CD14-positive monocyte (primary cell): ENCODE measurements at regions of chr12 and their contacts with region 1.

Region 1: DNA sequence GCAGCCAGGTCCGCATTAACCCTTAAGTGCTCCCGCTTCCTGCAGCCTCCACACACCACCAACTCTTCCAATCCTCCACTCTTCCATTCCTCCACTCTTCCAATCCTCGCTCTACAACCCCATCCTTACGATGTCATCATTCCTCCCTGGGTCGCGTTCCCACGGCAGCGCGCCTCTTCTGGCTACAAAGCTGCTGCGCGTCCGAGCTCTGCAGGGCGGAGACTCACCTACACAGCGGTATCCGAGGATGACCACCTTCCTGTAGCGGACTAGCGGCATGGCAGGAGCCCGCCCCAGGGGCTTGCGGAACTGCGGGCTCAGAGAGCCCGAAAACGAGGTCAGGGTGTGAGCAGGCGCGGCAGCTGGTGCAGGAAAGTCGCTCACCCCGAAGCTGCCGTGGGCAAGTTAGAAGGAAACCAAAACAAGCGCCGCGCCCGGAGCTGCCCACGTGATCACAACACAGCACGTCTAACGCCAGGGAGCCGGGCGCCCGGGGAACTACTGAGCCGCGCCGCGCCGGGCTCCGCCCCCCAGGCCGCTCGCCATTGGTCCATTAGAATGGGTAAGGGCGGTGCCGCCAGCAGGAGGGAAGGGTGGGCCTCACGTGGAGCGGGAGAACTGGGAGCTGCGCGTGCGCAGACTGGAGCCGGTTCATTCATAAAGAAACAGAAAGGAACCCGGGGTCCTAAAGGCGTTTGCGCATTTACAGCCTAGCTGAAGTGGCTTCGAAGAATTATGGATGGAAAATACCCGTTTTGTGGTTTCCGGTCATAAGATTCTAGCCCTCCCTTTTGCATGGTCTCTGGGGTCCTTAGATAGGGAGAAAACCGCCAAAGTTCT is at the start of gene RHEBL1:
- DNase-seq: peak; percentile 98 to 99 (median 98)
- H3K4me3 ChIP-seq: peak within 1 kb of the TSS; percentile 80 to 90 (median 81)
- H3K4me3 Mint-ChIP-seq: peak within 1 kb of the TSS; percentile 97 to 98
- H3K27ac ChIP-seq: peak within 1 kb of the TSS; percentile 69 to 72
- H3K27ac Mint-ChIP-seq: peak within 1 kb of the TSS; percentile 77 to 94 (median 91)
- H3K4me1 ChIP-seq: peaks cover 13 to 15% of the 10 kb centered on the region in 2 donors
- H3K4me1 Mint-ChIP-seq: peaks cover 15% of the 10 kb centered on the region
- H3K27me3 ChIP-seq: no peaks in the 10 kb centered on the region
- H3K27me3 Mint-ChIP-seq: peaks cover 1 to 9% (median 5%) of the 10 kb centered on the region in 3 donors
- CTCF ChIP-seq: peak; percentile 13
- polyA plus RNA-seq, gene RHEBL1: 0.17 to 0.96 (median 0.50) TPM

Region 2: GRCh38 chr12:48890657-48891418 is 178.9 kb before region 1 on chr12:
- intact Hi-C with region 1: no loop called
- DNase-seq: peak; percentile 41 to 64 (median 53)
- H3K4me3 ChIP-seq: no peak overlapping the region
- H3K4me3 Mint-ChIP-seq: peak overlapping the region in 1 of 2 donors; percentile 60
- H3K27ac ChIP-seq: no peak overlapping the region
- H3K27ac Mint-ChIP-seq: no peak overlapping the region
- H3K4me1 ChIP-seq: peaks cover 6 to 7% of the 10 kb centered on the region in 2 donors
- H3K4me1 Mint-ChIP-seq: peaks cover 6% of the 10 kb centered on the region
- H3K27me3 ChIP-seq: peaks cover 7 to 20% of the 10 kb centered on the region in 2 donors
- H3K27me3 Mint-ChIP-seq: peaks cover 24 to 40% (median 29%) of the 10 kb centered on the region in 3 donors
- CTCF ChIP-seq: peak; percentile 91

Region 3: DNA sequence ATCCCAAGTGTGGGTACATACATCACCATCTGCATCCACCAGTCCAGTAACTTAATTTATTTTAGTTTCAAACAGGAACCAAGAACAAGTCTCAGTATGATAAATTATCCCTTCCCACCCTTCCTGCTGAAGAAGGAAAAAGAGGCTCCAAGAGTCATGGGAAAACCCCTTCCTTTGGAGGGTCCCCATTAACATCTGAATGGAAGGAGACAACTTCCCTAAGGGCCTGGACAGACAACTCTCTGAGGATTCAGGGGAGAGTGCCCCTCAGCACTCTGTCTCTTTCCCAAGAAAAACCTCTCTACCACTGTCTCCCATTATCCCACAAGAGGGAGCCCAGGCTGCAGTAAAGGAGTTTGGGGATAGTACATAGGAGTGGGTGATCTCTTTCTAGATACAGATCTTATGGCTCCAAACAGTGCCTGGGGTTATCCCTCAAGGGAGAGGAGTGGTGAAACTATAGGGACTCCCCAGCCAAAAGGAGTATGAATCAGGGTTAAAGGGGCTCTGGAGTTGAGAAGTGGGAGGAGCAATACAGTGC is 104.4 kb before region 1 on chr12:
- intact Hi-C with region 1: no loop called
- DNase-seq: no peak
- H3K4me3 ChIP-seq: no peak overlapping the region
- H3K4me3 Mint-ChIP-seq: no peak overlapping the region
- H3K27ac ChIP-seq: no peak overlapping the region
- H3K27ac Mint-ChIP-seq: no peak overlapping the region
- H3K4me1 ChIP-seq: peaks cover 6 to 18% of the 10 kb centered on the region in 2 donors
- H3K4me1 Mint-ChIP-seq: peaks cover 14% of the 10 kb centered on the region
- H3K27me3 ChIP-seq: peaks cover 7 to 26% of the 10 kb centered on the region in 2 donors
- H3K27me3 Mint-ChIP-seq: peaks cover 21 to 33% (median 26%) of the 10 kb centered on the region in 3 donors
- CTCF ChIP-seq: no peak

Region 4: DNA sequence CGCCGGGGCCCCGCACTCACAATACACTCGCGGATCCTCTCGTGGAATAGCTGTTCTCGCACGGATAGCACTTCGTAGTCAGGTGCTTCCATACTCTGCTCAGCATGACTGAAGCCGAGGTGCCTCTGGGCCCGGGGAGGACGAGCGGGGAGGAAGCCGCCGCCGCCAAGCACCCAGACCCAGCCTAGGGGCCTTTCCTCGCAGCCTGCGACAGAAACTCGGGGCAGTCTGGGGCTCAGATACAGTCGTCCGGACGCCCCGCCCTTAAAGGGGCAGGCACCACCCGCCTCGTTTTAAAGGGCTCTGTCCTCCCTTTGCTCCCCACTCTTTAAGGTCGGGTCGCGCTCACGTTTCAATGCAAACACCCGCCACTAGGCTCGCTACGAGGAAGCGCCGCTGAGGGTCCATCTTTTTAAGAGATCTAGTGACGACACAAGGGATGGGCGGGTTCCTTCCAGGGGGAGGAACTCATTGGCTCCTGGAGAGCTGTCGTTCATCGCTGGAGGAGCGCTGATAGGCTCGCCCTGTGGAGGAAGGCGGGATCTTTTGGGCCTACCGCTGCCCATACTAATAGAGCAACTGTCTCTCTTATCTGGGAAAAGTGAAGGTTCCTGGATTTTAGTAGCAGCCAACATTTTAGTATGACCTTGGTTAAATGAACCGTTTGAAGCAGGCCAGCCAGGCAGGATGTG is 40.9 kb after region 1 on chr12 and contains the start of gene LMBR1L:
- intact Hi-C with region 1: loop called in 1 of 2 experiments (anchors 1 kb)
- DNase-seq: peak; percentile 97 to 99 (median 98)
- H3K4me3 ChIP-seq: peak within 1 kb of the TSS; percentile 71 to 100 (median 71)
- H3K4me3 Mint-ChIP-seq: peak within 1 kb of the TSS; percentile 95 to 100
- H3K27ac ChIP-seq: peak within 1 kb of the TSS; percentile 84 to 91
- H3K27ac Mint-ChIP-seq: peak within 1 kb of the TSS; percentile 90 to 96 (median 95)
- H3K4me1 ChIP-seq: peaks cover 42 to 50% of the 10 kb centered on the region in 2 donors
- H3K4me1 Mint-ChIP-seq: peaks cover 47% of the 10 kb centered on the region
- H3K27me3 ChIP-seq: no peaks in the 10 kb centered on the region
- H3K27me3 Mint-ChIP-seq: peaks cover 0 to 1% (median 1%) of the 10 kb centered on the region in 3 donors
- CTCF ChIP-seq: peak; percentile 57
- polyA plus RNA-seq, gene LMBR1L: 22.0 to 104 (median 25.9) TPM

Region 5: DNA sequence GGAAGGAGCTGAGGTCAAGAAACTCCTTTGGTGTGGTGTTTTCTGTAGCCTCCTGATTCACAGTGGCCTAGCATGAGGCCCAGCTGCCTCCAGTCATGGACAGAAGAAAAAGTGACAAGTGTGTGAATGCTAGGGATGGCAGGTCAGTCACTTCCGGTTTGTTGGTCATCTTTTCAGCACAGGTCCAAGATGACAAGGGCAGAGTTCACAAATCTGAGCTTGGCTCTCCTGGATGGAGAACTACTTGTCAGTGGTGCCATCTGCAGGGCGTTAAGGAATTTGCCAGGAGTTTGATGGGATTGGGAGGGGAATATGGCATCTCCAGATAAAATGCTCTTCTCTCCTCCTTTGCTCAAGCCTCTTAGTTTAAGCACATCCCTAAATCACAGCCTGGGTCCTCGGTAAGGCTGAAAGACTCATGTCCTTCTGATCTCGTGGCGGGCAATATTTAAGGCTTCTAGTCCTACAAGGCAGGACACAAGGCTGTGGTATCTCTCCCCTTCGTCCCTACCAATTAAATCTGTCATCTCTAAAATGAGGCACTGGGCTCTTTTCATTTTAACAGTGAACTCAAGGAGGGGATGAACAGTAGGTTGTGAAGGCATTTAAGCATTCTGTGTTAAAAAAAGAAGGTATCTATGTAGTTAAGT is 51.4 kb after region 1 on chr12:
- intact Hi-C with region 1: no loop called
- DNase-seq: peak in 2 of 3 donors; percentile 43 to 67
- H3K4me3 ChIP-seq: no peak overlapping the region
- H3K4me3 Mint-ChIP-seq: no peak overlapping the region
- H3K27ac ChIP-seq: no peak overlapping the region
- H3K27ac Mint-ChIP-seq: no peak overlapping the region
- H3K4me1 ChIP-seq: no peaks in the 10 kb centered on the region
- H3K4me1 Mint-ChIP-seq: peaks cover 2% of the 10 kb centered on the region
- H3K27me3 ChIP-seq: no peaks in the 10 kb centered on the region
- H3K27me3 Mint-ChIP-seq: peaks cover 0 to 9% (median 1%) of the 10 kb centered on the region in 3 donors
- CTCF ChIP-seq: peak; percentile 55

Region 6: DNA sequence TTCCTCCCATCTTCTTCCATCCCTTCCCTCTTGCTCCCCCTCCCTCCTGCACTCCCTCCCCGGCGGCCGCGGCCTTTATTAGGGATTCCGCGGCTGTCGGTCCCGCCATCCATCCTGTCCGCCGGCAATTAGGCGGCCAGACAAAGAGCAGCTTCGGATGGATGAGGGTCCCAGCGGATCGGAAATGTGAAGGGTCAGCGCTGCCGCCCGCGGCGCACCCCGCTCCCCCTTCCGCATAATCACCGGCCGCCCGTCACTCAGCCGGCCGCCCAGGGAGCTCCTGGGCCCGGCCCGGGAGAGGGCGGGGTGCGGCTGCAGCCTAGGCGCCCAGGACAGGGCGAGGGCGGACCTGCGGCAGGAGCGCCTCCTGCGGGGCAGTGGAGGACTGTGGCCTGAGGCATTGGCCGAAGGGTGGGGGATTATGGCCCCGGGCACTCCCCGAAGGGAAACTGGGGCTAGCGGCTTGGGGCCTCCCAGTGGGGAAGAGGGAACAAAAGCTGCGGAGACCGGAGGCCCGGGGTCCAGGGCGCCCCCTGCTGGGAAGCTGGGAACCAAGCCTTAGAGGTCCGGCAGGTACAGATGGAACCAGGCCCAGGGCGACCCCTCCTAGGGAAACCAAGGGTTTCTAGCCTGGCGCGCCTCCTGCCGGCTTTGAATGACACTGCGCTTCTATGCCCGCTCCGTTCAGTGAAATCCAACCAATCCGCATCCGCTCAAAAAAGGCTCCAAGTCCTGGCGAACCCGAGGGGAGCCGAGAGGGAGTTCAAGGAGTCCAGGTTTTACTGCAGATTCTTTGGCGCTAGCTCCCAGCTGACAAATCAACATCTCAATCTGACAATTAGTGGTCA is 272.6 kb after region 1 on chr12:
- intact Hi-C with region 1: loop called in 1 of 2 experiments (anchors 10 kb)
- DNase-seq: peak; percentile 53 to 74 (median 66)
- H3K4me3 ChIP-seq: peak overlapping the region; percentile 37 to 83 (median 40)
- H3K4me3 Mint-ChIP-seq: peak overlapping the region; percentile 76 to 92
- H3K27ac ChIP-seq: no peak overlapping the region
- H3K27ac Mint-ChIP-seq: no peak overlapping the region
- H3K4me1 ChIP-seq: peaks cover 39 to 48% of the 10 kb centered on the region in 2 donors
- H3K4me1 Mint-ChIP-seq: peaks cover 45% of the 10 kb centered on the region
- H3K27me3 ChIP-seq: peaks cover 82 to 99% of the 10 kb centered on the region in 2 donors
- H3K27me3 Mint-ChIP-seq: peaks cover 93 to 100% (median 98%) of the 10 kb centered on the region in 3 donors
- CTCF ChIP-seq: peak; percentile 99